Psoas muscle (tissue), 8 donors: ENCODE measurements at regions of chr3 and their contacts with region 1.

Region 1: DNA sequence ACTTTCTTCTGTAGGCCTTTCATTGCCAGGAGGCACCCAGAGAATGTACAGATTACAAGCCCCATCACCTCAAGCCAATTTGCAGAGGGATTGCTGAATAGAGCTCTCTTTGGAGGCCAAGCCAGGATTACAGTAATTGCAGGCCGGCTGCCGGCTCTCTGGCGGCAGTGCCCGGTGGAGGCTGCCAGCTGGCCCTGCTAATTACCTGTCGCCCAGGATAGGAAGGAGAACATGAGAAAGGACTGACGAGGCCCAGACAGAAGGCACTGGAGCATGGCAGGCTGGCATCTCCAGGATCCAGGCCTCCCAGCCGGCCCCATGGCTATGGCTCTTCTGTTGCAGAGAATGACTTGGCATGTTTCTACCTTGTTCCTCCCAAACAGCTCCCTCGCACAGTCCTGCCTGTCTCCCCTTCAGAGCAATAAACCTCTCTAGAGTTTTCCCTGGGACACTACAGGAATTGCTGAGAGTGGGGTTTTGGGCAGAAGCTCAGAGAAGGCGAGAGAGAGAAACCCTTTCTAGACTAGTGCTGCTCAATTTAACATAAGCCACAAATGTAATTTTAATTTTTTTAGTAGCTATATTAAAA is 273.6 kb upstream of the PROK2 start:
- DNase-seq: peak; percentile 55 to 81
- ATAC-seq: peak; percentile 89 to 99 (median 96)
- H3K4me3 ChIP-seq: no peak overlapping the region
- H3K27ac ChIP-seq: peak overlapping the region; percentile 52
- H3K4me1 ChIP-seq: peaks cover 5% of the 10 kb centered on the region
- H3K27me3 ChIP-seq: no peaks in the 10 kb centered on the region
- CTCF ChIP-seq: no peak

Region 2: DNA sequence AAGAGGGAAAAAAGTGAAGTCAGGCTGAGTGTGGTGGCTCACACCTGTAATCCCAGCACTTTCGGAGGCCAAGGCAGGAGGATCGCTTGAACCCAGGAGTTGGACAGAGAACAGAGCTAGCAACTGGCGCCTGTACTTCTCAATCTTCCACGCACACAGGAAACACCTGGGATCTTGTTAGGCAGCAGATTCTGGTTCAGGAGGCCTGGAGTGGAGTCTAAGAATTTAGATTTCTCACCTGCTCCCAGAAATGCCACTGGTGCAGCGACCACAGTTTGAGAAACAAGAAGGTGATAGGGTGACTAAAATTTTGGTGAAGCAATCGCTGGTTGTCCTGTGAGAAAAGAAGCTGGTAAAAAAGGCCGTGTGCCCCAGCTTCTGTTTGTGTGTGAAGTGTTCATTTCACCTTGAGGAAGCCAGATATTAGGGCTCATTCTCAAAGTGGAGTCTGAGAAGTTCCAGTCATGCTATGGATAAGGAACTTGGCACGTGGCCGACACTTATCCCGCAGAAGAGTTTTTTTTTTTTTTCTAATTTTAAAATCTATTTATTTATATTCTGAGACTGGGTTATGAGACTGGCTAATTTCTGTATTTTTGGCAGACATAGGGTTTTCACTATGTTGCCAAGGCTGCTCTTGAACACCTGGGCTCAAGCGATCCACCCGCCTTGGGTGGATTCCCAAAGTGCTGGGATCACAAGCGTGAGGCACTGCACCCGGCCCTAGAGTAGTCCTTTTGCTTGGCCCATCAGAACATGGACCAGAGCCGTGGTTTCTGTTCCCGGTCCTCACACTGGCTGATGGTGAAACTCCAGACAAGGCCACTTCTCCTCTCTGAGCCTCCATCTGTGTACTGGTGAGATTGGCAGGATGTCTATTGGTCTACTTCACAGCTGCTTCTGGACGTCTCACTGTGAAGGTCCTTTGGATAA is 51.0 kb after region 1 on chr3:
- intact Hi-C with region 1: loop called in 1 of 2 experiments (anchors 5 kb)
- DNase-seq: no peak
- ATAC-seq: no peak
- H3K4me3 ChIP-seq: no peak overlapping the region
- H3K27ac ChIP-seq: no peak overlapping the region
- H3K4me1 ChIP-seq: peaks cover 18% of the 10 kb centered on the region
- H3K27me3 ChIP-seq: no peaks in the 10 kb centered on the region
- CTCF ChIP-seq: no peak

Region 3: GRCh38 chr3:72462595-72463011 is 404.0 kb after region 1 on chr3:
- intact Hi-C with region 1: no loop called
- DNase-seq: peak; percentile 39 to 65
- ATAC-seq: peak; percentile 63 to 67 (median 65)
- H3K4me3 ChIP-seq: no peak overlapping the region
- H3K27ac ChIP-seq: no peak overlapping the region
- H3K4me1 ChIP-seq: peaks cover 9% of the 10 kb centered on the region
- H3K27me3 ChIP-seq: peaks cover 0 to 2% (median 0%) of the 10 kb centered on the region in 3 donors
- CTCF ChIP-seq: no peak